CD4-positive, alpha-beta memory T cell (primary cell): ENCODE measurements at regions of chr13 and their contacts with region 1.

Region 1: DNA sequence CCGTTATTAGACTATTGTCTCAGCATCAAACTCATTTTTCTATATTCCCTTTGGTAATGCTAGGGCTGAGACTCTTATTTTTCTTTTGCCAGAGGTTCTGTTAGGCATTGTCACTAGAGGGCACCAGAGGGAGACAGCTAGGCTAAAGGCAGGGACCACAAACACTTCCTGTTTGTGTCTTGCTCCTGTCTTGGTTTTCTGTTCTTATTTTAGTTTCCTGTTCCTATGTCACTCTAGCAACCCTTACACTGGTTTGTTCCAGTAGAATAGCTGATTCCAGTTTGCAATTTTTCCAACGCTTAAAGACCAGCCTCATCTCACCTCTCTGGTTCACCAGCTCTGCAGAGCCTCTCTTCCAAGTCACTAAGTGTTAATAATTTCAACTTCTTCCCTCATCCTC is 772.0 kb downstream of the DIAPH3 start:
- DNase-seq: peak; percentile 66 to 75 (median 73)
- H3K4me3 ChIP-seq: no peak overlapping the region
- H3K4me3 Mint-ChIP-seq: no peak overlapping the region
- H3K27ac ChIP-seq: no peak overlapping the region
- H3K27ac Mint-ChIP-seq: no peak overlapping the region
- H3K4me1 ChIP-seq: peaks cover 17% of the 10 kb centered on the region
- H3K4me1 Mint-ChIP-seq: no peaks in the 10 kb centered on the region
- H3K27me3 ChIP-seq: no peaks in the 10 kb centered on the region
- H3K27me3 Mint-ChIP-seq: peaks cover 6 to 11% of the 10 kb centered on the region in 2 donors

Region 2: GRCh38 chr13:59330764-59331163 is 60.9 kb before region 1 on chr13:
- CTCF ChIA-PET with region 1: no interaction called
- POLR2A ChIA-PET with region 1: no interaction called
- intact Hi-C with region 1: no loop called
- DNase-seq: no peak
- H3K4me3 ChIP-seq: no peak overlapping the region
- H3K4me3 Mint-ChIP-seq: no peak overlapping the region
- H3K27ac ChIP-seq: no peak overlapping the region
- H3K27ac Mint-ChIP-seq: no peak overlapping the region
- H3K4me1 ChIP-seq: no peaks in the 10 kb centered on the region
- H3K4me1 Mint-ChIP-seq: no peaks in the 10 kb centered on the region
- H3K27me3 ChIP-seq: no peaks in the 10 kb centered on the region
- H3K27me3 Mint-ChIP-seq: peaks cover 0 to 4% of the 10 kb centered on the region in 2 donors

Region 3: GRCh38 chr13:59409211-59409610 is 17.5 kb after region 1 on chr13:
- CTCF ChIA-PET with region 1: interaction called, 14 read pairs
- POLR2A ChIA-PET with region 1: no interaction called
- intact Hi-C with region 1: no loop called
- DNase-seq: no peak
- H3K4me3 ChIP-seq: no peak overlapping the region
- H3K4me3 Mint-ChIP-seq: no peak overlapping the region
- H3K27ac ChIP-seq: no peak overlapping the region
- H3K27ac Mint-ChIP-seq: no peak overlapping the region
- H3K4me1 ChIP-seq: no peaks in the 10 kb centered on the region
- H3K4me1 Mint-ChIP-seq: peaks cover 0 to 6% (median 0%) of the 10 kb centered on the region in 4 donors
- H3K27me3 ChIP-seq: no peaks in the 10 kb centered on the region
- H3K27me3 Mint-ChIP-seq: peaks cover 4 to 8% of the 10 kb centered on the region in 2 donors

Region 4: GRCh38 chr13:59771272-59771671 is 379.6 kb after region 1 on chr13:
- CTCF ChIA-PET with region 1: interaction called, 13 read pairs
- POLR2A ChIA-PET with region 1: no interaction called
- intact Hi-C with region 1: no loop called
- DNase-seq: no peak
- H3K4me3 ChIP-seq: no peak overlapping the region
- H3K4me3 Mint-ChIP-seq: no peak overlapping the region
- H3K27ac ChIP-seq: no peak overlapping the region
- H3K27ac Mint-ChIP-seq: no peak overlapping the region
- H3K4me1 ChIP-seq: no peaks in the 10 kb centered on the region
- H3K4me1 Mint-ChIP-seq: no peaks in the 10 kb centered on the region
- H3K27me3 ChIP-seq: no peaks in the 10 kb centered on the region
- H3K27me3 Mint-ChIP-seq: no peaks in the 10 kb centered on the region

Region 5: GRCh38 chr13:60163478-60164233 is 772.0 kb after region 1 on chr13 and contains the start of gene DIAPH3:
- CTCF ChIA-PET with region 1: interaction called, 4 read pairs
- POLR2A ChIA-PET with region 1: no interaction called
- intact Hi-C with region 1: loop called (anchors 5 kb)
- DNase-seq: peak; percentile 88 to 90 (median 89)
- H3K4me3 ChIP-seq: peak within 1 kb of the TSS; percentile 75 to 95
- H3K4me3 Mint-ChIP-seq: peak within 1 kb of the TSS; percentile 91 to 97 (median 95)
- H3K27ac ChIP-seq: peak within 1 kb of the TSS; percentile 52
- H3K27ac Mint-ChIP-seq: peak within 1 kb of the TSS; percentile 86 to 97 (median 96)
- H3K4me1 ChIP-seq: peaks cover 18% of the 10 kb centered on the region
- H3K4me1 Mint-ChIP-seq: peaks cover 19 to 33% (median 26%) of the 10 kb centered on the region in 4 donors
- H3K27me3 ChIP-seq: no peaks in the 10 kb centered on the region
- H3K27me3 Mint-ChIP-seq: no peaks in the 10 kb centered on the region
- total RNA-seq, gene DIAPH3: not detected

Region 6: GRCh38 chr13:60431108-60431700 is 1039.5 kb after region 1 on chr13:
- CTCF ChIA-PET with region 1: interaction called, 25 read pairs
- POLR2A ChIA-PET with region 1: interaction called, 3 read pairs
- intact Hi-C with region 1: loop called (anchors 1 kb)
- DNase-seq: peak in 4 of 5 donors; percentile 49 to 56 (median 52)
- H3K4me3 ChIP-seq: no peak overlapping the region
- H3K4me3 Mint-ChIP-seq: no peak overlapping the region
- H3K27ac ChIP-seq: no peak overlapping the region
- H3K27ac Mint-ChIP-seq: no peak overlapping the region
- H3K4me1 ChIP-seq: peaks cover 34% of the 10 kb centered on the region
- H3K4me1 Mint-ChIP-seq: peaks cover 27 to 36% (median 33%) of the 10 kb centered on the region in 4 donors
- H3K27me3 ChIP-seq: no peaks in the 10 kb centered on the region
- H3K27me3 Mint-ChIP-seq: no peaks in the 10 kb centered on the region